ENCODE measurements at regions of chr7 and their contacts with region 1.

Region 1: DNA sequence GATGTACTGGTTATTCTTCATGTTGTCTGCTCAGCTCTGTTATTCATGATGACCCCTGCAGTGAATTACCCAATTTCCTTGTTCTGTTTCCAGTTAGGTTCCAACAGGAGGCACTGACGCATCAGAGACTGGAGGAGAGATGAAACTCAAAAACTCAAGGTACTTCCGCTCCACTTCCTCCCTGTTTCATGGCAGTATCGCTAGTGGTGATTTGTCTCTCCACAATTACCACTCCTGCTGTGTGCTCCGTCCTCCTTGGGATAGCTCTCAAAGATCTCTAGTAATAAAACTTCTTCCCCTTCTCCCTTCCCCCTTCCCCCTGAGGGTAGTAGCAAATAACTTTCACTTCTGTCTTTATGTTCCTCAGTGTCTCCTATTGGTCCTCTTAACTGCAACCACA is 107.4 kb upstream of the ABCB5 start:
- DNase-seq: no peak
- H3K4me3 ChIP-seq: no peak overlapping the region
- H3K27ac ChIP-seq: no peak overlapping the region
- H3K27me3 ChIP-seq: no peaks in the 10 kb centered on the region
- CTCF ChIP-seq: peak in 1 of 56 donors; percentile 9

Region 2: GRCh38 chr7:20407585-20408461 is 100.3 kb before region 1 on chr7:
- intact Hi-C with region 1: loop called in 1 of 2 experiments (anchors 10 kb)
- DNase-seq: no peak
- H3K4me3 ChIP-seq: no peak overlapping the region
- H3K27ac ChIP-seq: peak overlapping the region in 7 of 59 donors; percentile 6 to 43 (median 30)
- H3K27me3 ChIP-seq: no peaks in the 10 kb centered on the region
- CTCF ChIP-seq: no peak

Region 3: DNA sequence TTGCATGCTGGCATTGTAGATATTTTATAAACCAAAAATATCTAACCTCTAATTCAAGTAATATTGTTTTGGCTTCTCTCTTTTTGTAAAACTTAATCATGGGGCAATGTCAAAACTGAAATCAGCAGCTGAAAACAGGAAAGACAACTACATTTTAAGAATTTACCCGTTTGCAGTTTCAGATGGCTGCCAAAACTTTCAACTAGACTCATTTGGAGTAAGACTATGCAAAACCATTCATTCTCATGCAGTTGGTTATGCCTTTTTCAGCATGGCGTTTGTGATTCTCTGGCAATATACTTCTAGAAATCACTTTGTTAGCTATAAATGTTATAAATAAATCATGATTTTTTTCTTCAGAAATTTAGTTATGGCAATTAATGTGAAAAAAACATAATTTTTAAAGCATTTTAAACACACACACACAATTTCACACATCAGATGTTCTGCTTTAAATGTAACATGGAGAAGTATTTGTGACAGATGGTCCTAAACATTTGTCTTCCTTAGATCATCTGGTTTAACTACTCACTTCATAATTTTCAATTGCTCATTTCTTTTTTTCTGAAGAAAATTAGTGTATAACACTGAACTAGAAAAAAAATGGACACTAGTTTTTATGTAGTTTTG is 61.0 kb before region 1 on chr7:
- intact Hi-C with region 1: no loop called
- DNase-seq: no peak
- H3K4me3 ChIP-seq: no peak overlapping the region
- H3K27ac ChIP-seq: no peak overlapping the region
- H3K27me3 ChIP-seq: peaks cover 0 to 4% (median 0%) of the 10 kb centered on the region in 45 donors
- CTCF ChIP-seq: no peak

Measured in dorsolateral prefrontal cortex (tissue), 120 donors.